ENCODE measurements at regions of chr1 and their contacts with region 1.

Region 1: GRCh38 chr1:39816415-39817090 is 27.9 kb upstream of the BMP8B start:
- DNase-seq: peak; percentile 77
- ATAC-seq: peak; percentile 81

Region 2: GRCh38 chr1:39754906-39755504 is 61.5 kb before region 1 on chr1:
- intact Hi-C with region 1: no loop called
- DNase-seq: no peak
- ATAC-seq: peak; percentile 77

Region 3: GRCh38 chr1:39901698-39902459 is 85.3 kb after region 1 on chr1 and contains the start of gene MYCL:
- intact Hi-C with region 1: loop called (anchors 2 kb)
- DNase-seq: peak; percentile 84
- ATAC-seq: peak; percentile 87
- total RNA-seq, gene MYCL: 1.5 TPM

Region 4: GRCh38 chr1:39973503-39974135 is 157.1 kb after region 1 on chr1:
- intact Hi-C with region 1: loop called (anchors 2 kb)
- DNase-seq: peak; percentile 84
- ATAC-seq: peak; percentile 86